ENCODE measurements at regions of chr3 and their contacts with region 1.

Region 1: GRCh38 chr3:125916376-125916978 is 52.5 kb upstream of the ROPN1B start:
- DNase-seq: peak; percentile 93
- H3K4me3 Mint-ChIP-seq: peak overlapping the region; percentile 86
- H3K27ac Mint-ChIP-seq: peak overlapping the region; percentile 83
- H3K4me1 Mint-ChIP-seq: peaks cover 24% of the 10 kb centered on the region
- H3K27me3 Mint-ChIP-seq: peaks cover 4% of the 10 kb centered on the region

Region 2: DNA sequence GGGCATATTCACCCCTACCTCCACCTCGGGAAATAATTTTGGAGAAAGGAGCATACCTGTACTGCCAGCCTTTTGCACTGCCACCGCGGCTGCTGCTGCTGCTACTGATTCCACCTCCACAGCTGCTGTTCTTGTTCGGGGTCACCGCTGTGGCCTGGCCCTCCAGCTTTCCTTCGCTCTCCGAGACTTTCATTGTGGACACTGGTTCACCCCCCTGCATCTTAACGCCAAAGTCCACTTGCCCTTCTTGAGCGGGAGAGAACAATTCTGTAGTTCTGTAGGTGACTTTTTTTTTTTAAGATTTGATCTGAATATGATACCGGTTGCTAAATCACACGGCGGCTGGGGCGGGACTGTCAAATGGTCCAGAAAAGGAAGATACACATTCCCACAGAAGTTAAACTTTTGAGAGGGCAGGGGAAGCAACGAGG is 321.9 kb before region 1 on chr3:
- intact Hi-C with region 1: loop called (anchors 1 kb)
- DNase-seq: peak; percentile 1
- H3K4me3 Mint-ChIP-seq: peak overlapping the region; percentile 95
- H3K27ac Mint-ChIP-seq: peak overlapping the region; percentile 88
- H3K4me1 Mint-ChIP-seq: peaks cover 28% of the 10 kb centered on the region
- H3K27me3 Mint-ChIP-seq: no peaks in the 10 kb centered on the region

Region 3: DNA sequence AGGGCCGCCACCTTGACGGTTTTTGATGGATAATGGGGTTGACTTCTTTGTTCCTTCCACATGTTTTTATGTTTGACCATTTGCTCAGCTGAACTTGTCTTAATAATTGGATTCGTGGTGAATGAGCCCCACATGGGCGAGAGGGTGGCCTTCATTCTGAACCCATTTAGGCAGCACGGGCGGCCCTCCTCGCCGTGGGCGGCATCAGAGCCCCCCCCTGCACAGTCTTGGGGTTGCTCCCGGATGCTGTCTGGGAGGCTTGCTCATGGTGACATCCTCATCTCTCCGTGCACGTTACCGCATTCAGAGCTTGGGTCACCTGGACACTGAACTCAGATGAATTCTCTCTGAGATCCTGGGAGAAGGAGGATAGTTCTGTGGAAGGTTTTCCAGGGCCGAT is 148.8 kb before region 1 on chr3:
- intact Hi-C with region 1: loop called (anchors 10 kb)
- DNase-seq: no peak
- H3K4me3 Mint-ChIP-seq: peak overlapping the region; percentile 76
- H3K27ac Mint-ChIP-seq: no peak overlapping the region
- H3K4me1 Mint-ChIP-seq: no peaks in the 10 kb centered on the region
- H3K27me3 Mint-ChIP-seq: peaks cover 30% of the 10 kb centered on the region

Region 4: DNA sequence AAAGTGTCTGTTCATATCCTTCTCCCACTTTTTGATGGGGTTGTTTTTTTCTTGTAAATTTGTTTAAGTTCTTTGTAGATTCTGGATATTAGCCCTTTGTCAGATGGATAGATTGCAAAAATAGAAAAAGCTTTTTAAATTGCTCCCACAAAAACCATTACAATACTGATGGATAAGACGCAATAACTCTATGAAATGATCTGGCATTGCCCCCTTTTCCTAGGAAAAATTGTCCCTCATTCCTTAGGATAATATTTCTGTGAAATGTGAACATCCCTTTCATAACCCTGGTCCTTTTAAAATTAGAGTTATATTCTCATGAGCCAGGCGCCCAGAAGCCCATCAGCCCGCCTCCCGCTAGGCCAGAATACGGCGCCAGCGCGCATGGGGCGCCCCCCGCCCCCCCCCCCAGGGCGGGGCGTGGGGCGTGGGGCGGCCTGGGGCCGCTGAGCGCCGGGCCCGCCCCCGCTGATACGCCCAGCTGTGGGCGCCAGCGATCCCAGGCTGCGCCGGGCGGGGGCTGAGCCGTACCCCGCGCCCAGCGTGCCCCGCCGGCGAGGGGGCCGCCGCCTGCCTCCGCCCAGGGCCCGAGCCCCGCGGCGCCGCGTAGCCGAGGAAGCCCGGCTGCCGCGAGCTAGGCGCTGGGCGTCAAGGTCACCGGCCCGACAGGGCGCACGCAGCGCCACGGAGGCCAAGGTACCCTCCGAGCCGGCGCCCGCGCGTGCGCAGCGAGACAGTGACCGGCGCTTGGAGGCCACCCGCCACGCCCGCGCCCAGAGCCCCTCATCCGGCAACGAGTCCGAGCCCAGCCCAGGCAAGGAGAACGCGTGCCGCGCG is 41.4 kb after region 1 on chr3:
- intact Hi-C with region 1: no loop called
- DNase-seq: no peak
- H3K4me3 Mint-ChIP-seq: no peak overlapping the region
- H3K27ac Mint-ChIP-seq: no peak overlapping the region
- H3K4me1 Mint-ChIP-seq: no peaks in the 10 kb centered on the region
- H3K27me3 Mint-ChIP-seq: peaks cover 8% of the 10 kb centered on the region

Region 5: GRCh38 chr3:125990253-125990970 is 73.9 kb after region 1 on chr3:
- intact Hi-C with region 1: loop called (anchors 1 kb)
- DNase-seq: peak; percentile 68
- H3K4me3 Mint-ChIP-seq: peak overlapping the region; percentile 90
- H3K27ac Mint-ChIP-seq: peak overlapping the region; percentile 88
- H3K4me1 Mint-ChIP-seq: peaks cover 16% of the 10 kb centered on the region
- H3K27me3 Mint-ChIP-seq: peaks cover 15% of the 10 kb centered on the region

Region 6: GRCh38 chr3:126258670-126259069 is 342.2 kb after region 1 on chr3:
- intact Hi-C with region 1: no loop called
- DNase-seq: no peak
- H3K4me3 Mint-ChIP-seq: no peak overlapping the region
- H3K27ac Mint-ChIP-seq: no peak overlapping the region
- H3K4me1 Mint-ChIP-seq: no peaks in the 10 kb centered on the region
- H3K27me3 Mint-ChIP-seq: no peaks in the 10 kb centered on the region

Measured in activated T-helper 1 cell treated with anti-CD3 and anti-CD28 coated beads, Interleukin-12 subunit alpha, Interleukin-12 subunit beta, Interleukin-2, Interleukin-4 antibody, amounts not matched to agents 30 ng/mL and 10 ng/mL and 1 ng/mL, durations not matched to agents 14 hours and 24 hours and 36 hours (primary cell).